Breast epithelium (tissue), 4 donors: ENCODE measurements at regions of chr7 and their contacts with region 1.

Region 1: GRCh38 chr7:47552621-47553020 is 29.3 kb downstream of the TNS3 start:
- DNase-seq: no peak
- H3K4me3 ChIP-seq: no peak overlapping the region
- H3K27ac ChIP-seq: peak overlapping the region in 1 of 2 donors; percentile 10
- H3K4me1 ChIP-seq: peaks cover 0 to 6% of the 10 kb centered on the region in 2 donors
- H3K27me3 ChIP-seq: no peaks in the 10 kb centered on the region
- CTCF ChIP-seq: no peak
- POLR2A ChIP-seq: no peak

Region 2: DNA sequence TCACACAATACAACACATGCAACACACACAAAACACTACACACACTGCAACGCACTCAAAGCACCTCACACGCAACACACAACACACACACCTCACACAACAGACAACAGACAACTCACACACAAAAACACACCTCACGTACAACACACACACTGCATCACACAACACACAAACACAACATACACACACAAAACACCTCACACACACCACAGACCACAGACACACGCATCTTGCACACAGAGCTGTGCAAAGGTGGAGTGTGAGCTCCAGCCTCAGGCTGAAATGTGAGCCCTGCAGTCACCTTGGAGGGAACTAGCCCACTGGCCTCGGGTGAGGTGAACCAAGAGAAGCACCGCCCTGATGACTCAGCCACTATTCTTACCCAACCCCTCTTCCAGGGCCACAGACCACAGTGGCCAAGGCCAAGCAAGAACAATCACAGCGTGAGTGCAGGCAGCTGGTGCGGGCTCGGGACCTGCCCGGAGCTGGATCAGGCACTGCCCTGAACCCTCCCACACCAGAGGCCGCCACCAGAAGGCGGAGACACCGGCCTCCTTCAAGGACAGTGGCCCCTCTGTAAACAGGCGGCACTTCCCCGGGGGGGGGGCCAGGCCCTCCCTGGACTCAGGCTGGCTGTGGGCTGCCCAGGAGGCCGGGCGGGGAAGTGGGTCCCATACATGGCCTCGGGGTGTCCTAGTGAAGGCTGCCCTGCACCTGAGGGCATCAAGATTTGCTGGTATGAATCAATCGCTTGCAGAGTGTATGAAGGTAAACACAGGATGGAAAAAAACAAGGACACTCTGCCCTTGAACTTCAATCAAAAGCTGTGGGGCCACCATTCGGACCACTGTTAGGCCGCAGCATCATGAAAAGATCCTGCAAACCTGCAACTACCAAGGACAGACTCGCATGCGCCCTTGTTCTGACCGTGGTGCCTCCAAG is 77.4 kb before region 1 on chr7:
- intact Hi-C with region 1: no loop called
- DNase-seq: peak; percentile 85 to 90
- H3K4me3 ChIP-seq: peak overlapping the region in 1 of 3 donors; percentile 34
- H3K27ac ChIP-seq: peak overlapping the region; percentile 81 to 88
- H3K4me1 ChIP-seq: peaks cover 5 to 7% of the 10 kb centered on the region in 2 donors
- H3K27me3 ChIP-seq: no peaks in the 10 kb centered on the region
- CTCF ChIP-seq: peak in 1 of 3 donors; percentile 25
- POLR2A ChIP-seq: no peak

Region 3: DNA sequence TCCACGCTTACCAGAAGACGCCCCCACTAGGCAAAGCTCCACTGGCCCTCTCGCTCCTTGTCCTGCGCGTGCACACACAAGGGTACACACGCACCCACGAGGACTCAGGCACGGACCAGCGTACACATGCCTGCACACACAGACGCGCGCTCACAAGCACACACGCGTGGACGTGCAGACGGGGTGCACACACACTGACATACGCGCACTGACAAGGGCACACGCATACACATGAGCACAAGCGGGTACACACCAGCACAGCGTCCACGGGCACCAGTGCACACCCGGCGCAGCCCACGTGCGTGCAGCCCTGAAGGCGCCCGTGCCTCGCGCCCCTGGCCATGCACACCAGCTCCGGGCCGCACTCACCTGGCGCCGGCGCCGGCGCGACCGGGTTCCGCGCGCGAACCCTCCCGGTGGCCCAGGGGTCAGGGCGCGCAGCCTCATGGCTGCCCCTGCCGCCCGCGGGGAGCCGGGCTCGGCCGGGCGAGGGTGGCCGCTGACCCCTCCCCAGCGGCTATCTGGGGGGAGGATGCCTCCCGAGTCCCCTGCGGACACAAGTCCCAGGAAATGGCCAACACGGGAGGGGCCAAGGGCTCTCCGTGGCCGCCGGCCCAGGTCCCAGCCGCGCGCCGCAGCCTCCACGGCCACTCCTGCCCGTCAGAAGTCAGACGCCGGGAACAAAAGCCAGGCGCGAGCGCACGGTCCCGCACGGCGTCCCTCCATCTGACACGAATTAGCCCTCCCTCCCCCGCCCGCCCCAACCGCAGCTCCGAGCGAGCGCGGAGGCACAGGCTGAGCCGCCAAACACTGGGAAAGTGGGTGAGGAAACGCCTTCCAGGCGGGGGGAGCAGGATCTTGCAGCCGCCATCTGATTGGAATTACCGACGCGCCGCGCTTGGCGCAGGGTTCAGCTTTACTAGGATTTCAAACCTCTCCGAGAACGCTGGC is 15.7 kb before region 1 on chr7:
- intact Hi-C with region 1: no loop called
- DNase-seq: peak; percentile 43 to 68
- H3K4me3 ChIP-seq: peak overlapping the region; percentile 45 to 72 (median 54)
- H3K27ac ChIP-seq: no peak overlapping the region
- H3K4me1 ChIP-seq: peaks cover 0 to 7% of the 10 kb centered on the region in 2 donors
- H3K27me3 ChIP-seq: no peaks in the 10 kb centered on the region
- CTCF ChIP-seq: no peak
- POLR2A ChIP-seq: no peak

Region 4: GRCh38 chr7:47591655-47592572 is 39.3 kb after region 1 on chr7:
- intact Hi-C with region 1: loop called (anchors 2 kb)
- DNase-seq: no peak
- H3K4me3 ChIP-seq: no peak overlapping the region
- H3K27ac ChIP-seq: no peak overlapping the region
- H3K4me1 ChIP-seq: peaks cover 0 to 5% of the 10 kb centered on the region in 2 donors
- H3K27me3 ChIP-seq: no peaks in the 10 kb centered on the region
- CTCF ChIP-seq: no peak
- POLR2A ChIP-seq: no peak